Posterior vena cava (tissue), 2 donors: ENCODE measurements at regions of chr14 and their contacts with region 1.

Region 1: GRCh38 chr14:85010186-85010585 is 519.8 kb upstream of the FLRT2 start:
- DNase-seq: no peak

Region 2: DNA sequence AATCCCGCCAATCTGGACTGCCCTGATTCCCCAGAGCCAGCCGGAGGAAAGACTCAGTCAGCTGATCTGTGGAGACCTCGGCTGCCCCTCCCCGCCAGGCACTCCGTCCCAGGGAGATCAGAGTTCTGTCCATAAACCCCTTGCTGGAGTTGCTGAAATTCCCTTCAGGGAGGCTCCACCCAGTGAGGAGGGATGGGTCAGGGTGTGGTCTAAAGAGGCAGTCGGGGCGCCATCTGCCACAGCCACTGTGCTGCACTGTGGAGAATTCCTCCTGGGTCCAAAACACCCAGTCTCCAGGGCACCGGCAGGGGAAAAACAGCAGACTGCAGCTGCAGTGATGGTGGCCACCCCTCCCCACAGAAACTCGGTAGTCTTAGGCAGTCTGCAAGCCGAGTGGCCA is 1402.5 kb before region 1 on chr14:
- intact Hi-C with region 1: loop called in 1 of 2 experiments (anchors 5 kb)
- DNase-seq: no peak

Region 3: DNA sequence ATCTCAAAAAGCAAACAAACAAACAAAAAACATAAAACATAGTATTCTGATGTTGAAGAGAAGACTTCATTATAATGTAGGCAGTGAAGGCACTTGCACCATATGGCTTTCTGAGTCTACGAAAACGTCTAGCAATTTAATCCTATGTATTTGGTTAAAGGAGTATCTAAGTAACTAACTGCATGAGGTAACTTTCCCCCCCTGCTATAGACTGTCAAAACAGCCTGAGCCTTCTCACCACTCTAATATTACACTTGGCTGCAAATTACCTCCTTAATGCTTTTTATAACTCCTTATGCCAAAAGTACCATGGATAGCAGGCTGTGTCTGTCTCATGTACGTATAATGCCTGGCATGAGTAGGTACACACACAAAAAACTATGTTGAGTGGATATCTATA is 87.8 kb before region 1 on chr14:
- intact Hi-C with region 1: no loop called
- DNase-seq: no peak

Region 4: GRCh38 chr14:84975241-84975902 is 34.8 kb before region 1 on chr14:
- intact Hi-C with region 1: loop called in 1 of 2 experiments (anchors 2 kb)
- DNase-seq: no peak

Region 5: DNA sequence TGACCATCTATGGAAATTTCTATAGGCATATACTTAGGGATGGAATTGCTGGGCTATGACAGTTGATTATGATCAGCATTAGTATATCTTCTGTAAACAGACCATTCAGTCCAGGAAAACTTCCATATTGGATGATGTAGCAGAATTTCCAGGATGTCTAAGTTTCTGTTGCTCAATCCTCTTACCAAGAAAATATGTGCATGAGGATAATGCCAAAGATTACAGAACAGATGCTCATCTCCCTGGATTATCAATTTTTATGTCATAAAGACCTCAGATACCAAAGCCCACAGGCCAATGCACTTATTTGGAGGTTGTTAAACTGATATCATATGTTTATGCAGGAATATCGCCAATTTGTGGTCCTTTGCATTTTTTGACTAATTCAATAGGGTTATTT is 165.4 kb after region 1 on chr14:
- intact Hi-C with region 1: no loop called
- DNase-seq: no peak